CD4-positive, alpha-beta memory T cell (primary cell): ENCODE measurements at regions of chr12 and their contacts with region 1.

Region 1: GRCh38 chr12:2812290-2813213 is at the start of gene ITFG2:
- DNase-seq: peak; percentile 96 to 99 (median 98)
- H3K4me3 ChIP-seq: peak within 1 kb of the TSS; percentile 93 to 97
- H3K4me3 Mint-ChIP-seq: peak within 1 kb of the TSS; percentile 99 to 100 (median 99)
- H3K27ac ChIP-seq: peak within 1 kb of the TSS; percentile 90
- H3K27ac Mint-ChIP-seq: peak within 1 kb of the TSS; percentile 99 to 100 (median 100)
- H3K4me1 ChIP-seq: peaks cover 24% of the 10 kb centered on the region
- H3K4me1 Mint-ChIP-seq: peaks cover 12 to 37% (median 25%) of the 10 kb centered on the region in 4 donors
- H3K27me3 ChIP-seq: no peaks in the 10 kb centered on the region
- H3K27me3 Mint-ChIP-seq: peaks cover 0 to 4% of the 10 kb centered on the region in 2 donors
- total RNA-seq, gene ITFG2: 116 to 133 TPM

Region 2: DNA sequence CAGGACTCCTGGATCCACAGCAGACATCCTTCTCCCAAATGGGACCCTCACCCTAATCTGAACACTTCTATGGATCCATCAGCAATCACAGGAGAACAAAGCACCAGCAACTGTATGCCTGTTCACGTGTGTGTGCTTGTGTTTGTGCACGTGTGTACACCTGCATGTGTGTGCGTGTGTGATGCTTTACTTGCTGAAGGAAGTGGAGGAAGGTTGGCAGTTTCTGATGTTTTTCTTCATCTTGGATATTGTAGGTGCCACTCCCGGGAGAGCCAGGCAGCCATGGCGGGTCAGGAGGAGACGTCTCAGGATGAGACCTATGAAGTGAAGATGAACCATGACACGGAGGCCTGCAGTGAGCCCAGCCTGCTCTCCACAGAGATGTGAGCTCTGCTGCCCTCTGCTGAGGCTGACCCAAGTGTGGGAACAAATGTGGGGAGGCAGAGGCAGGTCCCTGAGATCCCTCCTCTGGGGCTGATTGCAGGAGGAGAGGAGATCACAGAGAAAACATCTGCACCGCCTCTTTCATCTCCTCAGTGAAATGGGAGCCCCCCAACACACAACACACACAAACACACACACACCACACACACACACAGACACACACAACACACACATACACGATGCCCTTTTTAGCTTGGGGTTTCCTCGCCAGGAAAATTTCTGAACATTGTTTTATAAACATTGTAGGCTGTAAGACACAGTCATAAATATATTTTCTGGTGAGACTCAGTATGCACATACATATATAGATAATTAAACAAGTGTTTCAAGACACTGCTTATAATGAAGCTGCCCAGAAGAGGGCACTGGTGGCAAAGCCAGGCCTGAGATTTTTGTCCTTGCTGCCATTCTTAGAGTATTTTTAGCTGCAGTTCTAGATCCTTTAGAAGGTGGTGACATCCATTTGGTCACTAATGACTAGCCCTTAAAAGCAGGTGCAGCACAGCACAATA is 130.0 kb before region 1 on chr12:
- CTCF ChIA-PET with region 1: interaction called, 15 read pairs
- POLR2A ChIA-PET with region 1: no interaction called
- intact Hi-C with region 1: loop called (anchors 1 kb)
- DNase-seq: peak; percentile 54 to 65 (median 62)
- H3K4me3 ChIP-seq: no peak overlapping the region
- H3K4me3 Mint-ChIP-seq: peak overlapping the region in 4 of 8 donors; percentile 57 to 79 (median 75)
- H3K27ac ChIP-seq: no peak overlapping the region
- H3K27ac Mint-ChIP-seq: peak overlapping the region; percentile 54 to 98 (median 94)
- H3K4me1 ChIP-seq: no peaks in the 10 kb centered on the region
- H3K4me1 Mint-ChIP-seq: peaks cover 6 to 13% (median 9%) of the 10 kb centered on the region in 4 donors
- H3K27me3 ChIP-seq: no peaks in the 10 kb centered on the region
- H3K27me3 Mint-ChIP-seq: peaks cover 0 to 2% of the 10 kb centered on the region in 2 donors

Region 3: DNA sequence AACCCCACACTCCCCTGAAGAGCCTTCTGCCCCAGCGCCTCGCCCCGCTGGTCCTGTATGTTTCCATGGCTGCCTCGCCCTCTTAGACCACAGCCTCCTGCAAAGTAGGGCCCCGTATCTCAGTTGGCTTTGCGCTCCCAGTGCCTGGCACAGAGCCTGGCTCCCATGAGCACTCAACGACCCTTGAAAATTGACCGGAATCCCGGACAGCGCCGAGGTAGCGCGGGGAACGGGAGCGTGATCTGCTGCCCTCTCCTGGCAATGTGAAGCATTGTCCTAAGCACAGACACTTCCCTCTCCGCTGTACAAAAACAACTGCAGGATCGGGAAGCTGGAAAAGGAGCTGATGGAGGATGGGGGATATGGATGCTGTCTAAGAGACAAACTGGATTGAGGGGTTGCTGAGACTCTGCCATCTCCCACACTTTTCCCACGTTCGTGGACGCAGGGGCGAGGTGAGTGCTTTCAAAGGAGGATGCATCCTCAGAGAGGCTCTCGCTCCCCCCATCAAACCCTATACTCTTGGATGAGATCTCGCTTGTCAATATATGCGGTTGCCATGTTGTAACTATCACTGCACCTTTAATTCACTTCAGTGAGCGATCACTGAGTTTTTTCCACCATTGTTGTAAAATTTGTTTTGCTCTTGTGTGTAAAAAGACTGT is 28.5 kb before region 1 on chr12:
- CTCF ChIA-PET with region 1: interaction called, 6 read pairs
- POLR2A ChIA-PET with region 1: interaction called, 3 read pairs
- intact Hi-C with region 1: loop called (anchors 1 kb)
- DNase-seq: peak; percentile 38 to 51 (median 45)
- H3K4me3 ChIP-seq: no peak overlapping the region
- H3K4me3 Mint-ChIP-seq: peak overlapping the region; percentile 70 to 92 (median 83)
- H3K27ac ChIP-seq: no peak overlapping the region
- H3K27ac Mint-ChIP-seq: peak overlapping the region in 3 of 7 donors; percentile 53 to 79 (median 55)
- H3K4me1 ChIP-seq: peaks cover 9% of the 10 kb centered on the region
- H3K4me1 Mint-ChIP-seq: peaks cover 9 to 13% (median 11%) of the 10 kb centered on the region in 4 donors
- H3K27me3 ChIP-seq: no peaks in the 10 kb centered on the region
- H3K27me3 Mint-ChIP-seq: peaks cover 9 to 17% of the 10 kb centered on the region in 2 donors

Region 4: DNA sequence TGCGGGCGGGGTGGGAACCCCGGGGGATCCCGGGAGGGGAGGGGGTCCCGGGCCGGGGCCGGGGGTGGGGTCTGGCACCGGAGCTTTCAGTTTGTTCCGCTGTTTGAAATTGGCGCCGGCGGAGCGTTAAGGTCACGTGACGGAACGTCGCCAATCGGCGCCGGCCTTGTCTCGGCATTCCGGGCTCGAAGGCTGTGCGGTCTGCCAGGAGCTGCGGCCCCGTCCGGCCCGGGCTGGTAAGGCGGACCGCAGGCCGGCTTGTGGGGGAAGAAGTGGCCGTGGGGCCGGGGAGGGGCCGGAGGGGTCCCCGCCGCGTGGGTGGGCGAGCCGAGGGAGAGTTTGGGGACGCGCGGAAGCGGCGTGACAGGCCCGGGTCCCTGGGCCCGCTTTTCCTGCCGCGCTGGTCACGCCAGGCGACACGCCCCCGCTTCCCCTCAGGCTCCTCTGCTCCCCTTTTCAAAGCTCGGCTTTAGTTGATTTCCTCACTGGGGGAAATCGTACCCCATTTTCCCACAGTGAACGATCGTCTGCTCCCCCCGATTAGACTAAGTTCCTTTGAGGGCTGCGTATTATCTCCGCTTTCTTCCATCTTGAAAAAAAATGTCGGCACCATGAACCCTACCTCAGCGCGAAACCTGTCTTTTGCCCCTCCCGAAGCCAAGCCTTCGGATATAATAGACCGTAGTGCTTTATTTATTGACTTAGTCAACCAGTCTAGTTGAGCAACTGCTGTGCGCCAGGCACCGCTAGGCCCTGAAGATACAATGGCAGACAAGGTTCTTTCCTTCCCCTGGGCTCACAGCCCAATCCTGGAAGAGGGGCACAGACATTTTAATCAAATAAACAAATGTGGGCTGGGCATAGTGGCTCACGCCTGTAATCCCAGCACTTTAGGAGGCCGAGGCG is 64.7 kb after region 1 on chr12 and contains the starts of genes FOXM1 and RHNO1:
- CTCF ChIA-PET with region 1: no interaction called
- POLR2A ChIA-PET with region 1: interaction called, 21 read pairs
- intact Hi-C with region 1: loop called (anchors 1 kb)
- DNase-seq: peak; percentile 88 to 92 (median 89)
- H3K4me3 ChIP-seq: peak within 1 kb of the TSS; percentile 92 to 98
- H3K4me3 Mint-ChIP-seq: peak within 1 kb of the TSS; percentile 97 to 100 (median 99)
- H3K27ac ChIP-seq: peak within 1 kb of the TSS; percentile 96
- H3K27ac Mint-ChIP-seq: peak within 1 kb of the TSS; percentile 98 to 100 (median 99)
- H3K4me1 ChIP-seq: peaks cover 38% of the 10 kb centered on the region
- H3K4me1 Mint-ChIP-seq: peaks cover 25 to 44% (median 33%) of the 10 kb centered on the region in 4 donors
- H3K27me3 ChIP-seq: no peaks in the 10 kb centered on the region
- H3K27me3 Mint-ChIP-seq: no peaks in the 10 kb centered on the region
- total RNA-seq, gene FOXM1: 0.30 to 0.44 TPM
- total RNA-seq, gene RHNO1: 31.2 to 35.7 TPM

Region 5: GRCh38 chr12:3041558-3042164 is 229.1 kb after region 1 on chr12:
- CTCF ChIA-PET with region 1: no interaction called
- POLR2A ChIA-PET with region 1: no interaction called
- intact Hi-C with region 1: no loop called
- DNase-seq: peak in 4 of 5 donors; percentile 35 to 47 (median 39)
- H3K4me3 ChIP-seq: no peak overlapping the region
- H3K4me3 Mint-ChIP-seq: no peak overlapping the region
- H3K27ac ChIP-seq: no peak overlapping the region
- H3K27ac Mint-ChIP-seq: peak overlapping the region in 1 of 7 donors; percentile 62
- H3K4me1 ChIP-seq: no peaks in the 10 kb centered on the region
- H3K4me1 Mint-ChIP-seq: peaks cover 0 to 1% (median 0%) of the 10 kb centered on the region in 4 donors
- H3K27me3 ChIP-seq: no peaks in the 10 kb centered on the region
- H3K27me3 Mint-ChIP-seq: peaks cover 26 to 31% of the 10 kb centered on the region in 2 donors